GM12878 (cell line): ENCODE measurements at regions of chr1 and their contacts with region 1.

Region 1: GRCh38 chr1:246364415-246364941 is 142.6 kb downstream of the SMYD3 start:
- DNase-seq: no peak
- ATAC-seq: peak; percentile 86
- H3K4me3 ChIP-seq: peak overlapping the region; percentile 22; the same call in 1 of the 2 replicates
- H3K27ac ChIP-seq: peak overlapping the region; percentile 24; the same call in 1 of the 2 replicates
- H3K4me1 ChIP-seq: peaks cover 19% of the 10 kb centered on the region
- H3K27me3 ChIP-seq: no peaks in the 10 kb centered on the region
- CTCF ChIP-seq: no peak
- EP300 ChIP-seq: no peak
- POLR2A ChIP-seq: no peak
- RAD21 ChIP-seq: no peak

Region 2: GRCh38 chr1:246329900-246330299 is 34.6 kb before region 1 on chr1:
- CTCF ChIA-PET with region 1: no interaction called
- POLR2A ChIA-PET with region 1: no interaction called
- RAD21 ChIA-PET with region 1: interaction called, 3 read pairs
- SMC1A ChIA-PET with region 1: interaction called, 5 read pairs
- in situ Hi-C with region 1: no loop called
- intact Hi-C with region 1: loop called (anchors 2 kb)
- DNase-seq: peak; percentile 91
- ATAC-seq: peak; percentile 94
- H3K4me3 ChIP-seq: no peak overlapping the region
- H3K27ac ChIP-seq: no peak overlapping the region
- H3K4me1 ChIP-seq: peaks cover 16% of the 10 kb centered on the region
- H3K27me3 ChIP-seq: no peaks in the 10 kb centered on the region
- CTCF ChIP-seq: peak in 2 of 3 experiments; percentile 6 to 15; a peak in 2 of 6 replicates
- EP300 ChIP-seq: peak; percentile 85 to 90
- POLR2A ChIP-seq: no peak
- RAD21 ChIP-seq: no peak